ENCODE measurements at regions of chr13 and their contacts with region 1.

Region 1: DNA sequence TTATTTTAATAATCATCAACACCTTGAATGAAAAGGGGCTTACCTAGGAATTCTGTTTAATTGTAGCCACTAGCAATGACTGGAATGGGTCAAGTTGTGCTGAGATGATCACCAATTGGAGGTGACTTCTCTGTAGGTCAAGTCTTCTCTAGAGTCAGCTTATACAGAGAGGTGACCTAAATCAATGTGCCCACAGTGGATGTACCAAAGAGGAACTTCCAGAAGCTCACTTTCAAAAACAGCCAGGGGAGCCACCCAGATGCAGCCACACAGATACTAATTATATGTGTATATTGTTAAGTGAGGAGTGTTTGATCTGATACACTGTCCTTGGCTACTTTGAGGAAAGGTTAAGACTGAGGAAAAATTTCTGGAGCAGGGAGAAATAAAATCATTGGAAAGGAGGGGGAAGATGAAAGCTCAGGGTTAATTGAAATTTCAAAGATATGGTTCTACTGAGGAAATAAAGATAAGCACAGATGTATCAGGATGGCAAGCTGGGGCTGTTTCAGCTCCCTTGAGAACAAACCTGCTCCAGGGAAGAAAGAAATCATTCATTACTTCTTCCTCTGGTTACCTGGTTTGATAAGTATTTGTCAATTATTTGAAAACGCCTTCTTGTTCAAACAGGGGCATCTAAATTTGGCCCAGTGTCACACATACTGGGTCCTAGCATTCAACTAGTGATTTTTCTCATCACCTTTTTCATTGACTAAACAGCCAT is 5.1 kb downstream of the GPR183 start:
- DNase-seq: no peak
- H3K4me3 ChIP-seq: peak overlapping the region in 1 of 4 donors; percentile 3
- H3K27ac ChIP-seq: peak overlapping the region; percentile 36 to 76 (median 62)
- H3K4me1 ChIP-seq: peaks cover 0 to 13% (median 0%) of the 10 kb centered on the region in 4 donors
- H3K27me3 ChIP-seq: no peaks in the 10 kb centered on the region
- CTCF ChIP-seq: no peak
- EP300 ChIP-seq: no peak
- POLR2A ChIP-seq: no peak

Region 2: DNA sequence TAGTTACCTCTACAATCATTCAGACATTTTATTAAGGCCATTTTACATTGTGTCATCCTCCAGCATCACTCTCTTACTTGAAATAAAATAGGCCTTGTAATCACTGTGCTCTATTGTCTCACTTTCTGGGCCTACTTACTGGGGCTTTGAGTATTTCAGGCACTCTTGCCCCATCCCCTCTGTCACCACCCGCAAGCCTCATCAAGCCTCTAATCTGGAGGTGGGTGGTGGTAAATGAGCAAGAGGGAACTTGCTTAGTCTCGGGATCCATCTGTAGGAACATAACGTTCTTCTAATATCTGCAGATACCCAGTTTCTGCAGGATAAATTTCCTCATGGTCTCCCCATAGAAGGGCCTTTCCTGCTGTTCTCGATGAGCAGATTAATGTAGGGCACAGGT is 24.4 kb before region 1 on chr13:
- in situ Hi-C with region 1: no loop called
- intact Hi-C with region 1: loop called (anchors 2 kb)
- DNase-seq: no peak
- H3K4me3 ChIP-seq: no peak overlapping the region
- H3K27ac ChIP-seq: no peak overlapping the region
- H3K4me1 ChIP-seq: peaks cover 3 to 38% (median 24%) of the 10 kb centered on the region in 4 donors
- H3K27me3 ChIP-seq: no peaks in the 10 kb centered on the region
- CTCF ChIP-seq: no peak
- EP300 ChIP-seq: no peak
- POLR2A ChIP-seq: no peak